ENCODE measurements at regions of chr4 and their contacts with region 1.

Region 1: GRCh38 chr4:3136453-3136852 is 62.0 kb downstream of the HTT start:
- DNase-seq: no peak
- ATAC-seq: no peak
- H3K4me3 ChIP-seq: no peak overlapping the region
- H3K27ac ChIP-seq: no peak overlapping the region
- H3K4me1 ChIP-seq: no peaks in the 10 kb centered on the region
- H3K27me3 ChIP-seq: no peaks in the 10 kb centered on the region
- CTCF ChIP-seq: peak; percentile 7 to 39 (median 27); a peak in 2 of 6 replicates
- POLR2A ChIP-seq: no peak
- RAD21 ChIP-seq: 0 out of 2 replicates have a peak, but pooled peaks have one; percentile 19

Region 2: DNA sequence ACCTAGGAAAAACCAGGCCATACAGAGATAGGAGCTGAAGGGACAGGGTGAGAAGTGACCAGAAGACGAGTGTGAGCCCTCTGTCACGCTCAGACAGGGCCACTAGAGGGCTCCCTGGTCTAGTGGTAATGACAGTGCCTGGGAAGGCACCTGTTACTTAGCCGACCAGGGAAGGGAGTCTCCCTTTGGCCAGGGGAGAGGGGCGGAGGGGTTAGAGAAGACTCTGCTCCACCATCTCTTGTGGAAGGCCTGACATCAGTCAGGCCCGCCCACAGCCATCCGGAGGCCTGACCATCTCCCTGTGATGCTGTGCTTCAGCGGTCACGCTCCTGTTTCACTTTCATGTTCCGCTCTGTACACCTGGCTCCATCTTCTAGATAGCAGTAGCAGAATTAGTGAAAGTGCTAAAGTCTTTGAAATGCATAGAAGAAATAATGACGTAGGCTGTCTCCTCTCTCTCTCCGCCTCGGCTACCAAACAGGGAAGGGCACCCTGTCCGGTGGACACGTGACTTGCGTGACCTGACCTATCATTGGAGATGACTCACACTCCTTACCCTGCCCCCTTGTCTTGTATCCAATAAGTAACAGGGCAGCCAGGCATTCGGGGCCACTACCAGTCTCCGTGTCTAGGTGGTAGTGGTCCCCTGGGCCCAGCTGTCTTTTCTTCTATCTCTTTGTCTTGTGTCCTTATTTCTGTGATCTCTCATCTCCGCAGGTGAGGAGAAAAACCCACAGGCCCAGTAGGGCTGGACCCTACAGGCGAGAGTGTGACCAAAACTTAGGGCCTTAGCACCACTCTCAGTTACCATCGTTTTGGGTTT is 88.8 kb before region 1 on chr4:
- CTCF ChIA-PET with region 1: interaction called, 3 read pairs
- POLR2A ChIA-PET with region 1: no interaction called
- RAD21 ChIA-PET with region 1: interaction called in 1 of 2 experiments, 3 read pairs
- intact Hi-C with region 1: loop called (anchors 5 kb)
- DNase-seq: peak; percentile 45
- ATAC-seq: peak; percentile 98
- H3K4me3 ChIP-seq: no peak overlapping the region
- H3K27ac ChIP-seq: no peak overlapping the region
- H3K4me1 ChIP-seq: no peaks in the 10 kb centered on the region
- H3K27me3 ChIP-seq: no peaks in the 10 kb centered on the region
- CTCF ChIP-seq: peak; percentile 51 to 87 (median 71); a peak in 5 of 6 replicates
- POLR2A ChIP-seq: no peak
- RAD21 ChIP-seq: peak; percentile 79